ENCODE measurements at regions of chr1 and their contacts with region 1.

Region 1: DNA sequence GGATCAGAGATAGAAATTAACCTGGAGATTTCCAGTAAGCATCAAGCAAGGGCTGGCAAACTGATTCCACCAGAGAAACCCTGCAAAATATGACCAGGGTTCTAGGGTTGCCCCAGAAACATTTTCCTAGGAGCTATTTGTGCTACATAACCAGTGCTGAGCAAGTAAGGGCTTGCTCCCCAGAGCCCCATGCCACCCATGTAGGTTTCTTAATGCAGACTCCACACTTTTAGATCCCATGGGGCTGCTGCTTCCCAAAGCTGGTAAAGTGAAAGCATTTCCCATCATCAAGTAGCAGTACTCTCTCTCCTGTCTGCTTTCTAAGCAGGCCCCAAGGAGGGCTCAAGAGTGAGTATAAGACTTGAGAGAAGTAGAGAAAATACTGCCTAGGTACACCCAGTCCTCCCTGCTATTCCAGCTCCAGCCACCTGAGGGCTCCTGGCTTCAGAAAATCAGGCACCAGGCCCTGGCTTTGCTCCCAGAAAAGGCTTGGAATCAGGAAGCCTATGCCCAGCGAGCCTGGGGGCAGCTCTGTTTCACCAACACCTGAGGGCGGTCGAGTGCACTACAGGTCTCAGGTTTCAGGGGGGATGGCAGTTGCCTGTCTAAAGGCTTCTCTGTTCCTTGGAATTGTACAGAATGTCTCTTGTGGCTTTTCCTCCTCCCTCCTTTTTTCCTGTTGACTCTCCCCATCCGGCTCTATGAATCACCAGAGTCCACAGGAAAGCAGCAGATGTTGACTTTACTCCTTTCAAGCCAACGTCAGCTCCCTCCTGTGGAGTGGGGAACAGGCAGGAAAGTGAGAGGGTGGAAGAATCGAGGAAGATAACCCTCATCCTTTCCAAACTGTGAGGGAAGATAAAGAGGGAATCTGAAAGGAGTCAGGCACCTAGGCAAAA is 6.2 kb upstream of the ANKRD35 start:
- DNase-seq: peak; percentile 93
- H3K4me3 ChIP-seq: no peak overlapping the region; the same call in 1 of the 2 replicates
- H3K27me3 ChIP-seq: no peaks in the 10 kb centered on the region
- CTCF ChIP-seq: peak; percentile 93

Region 2: DNA sequence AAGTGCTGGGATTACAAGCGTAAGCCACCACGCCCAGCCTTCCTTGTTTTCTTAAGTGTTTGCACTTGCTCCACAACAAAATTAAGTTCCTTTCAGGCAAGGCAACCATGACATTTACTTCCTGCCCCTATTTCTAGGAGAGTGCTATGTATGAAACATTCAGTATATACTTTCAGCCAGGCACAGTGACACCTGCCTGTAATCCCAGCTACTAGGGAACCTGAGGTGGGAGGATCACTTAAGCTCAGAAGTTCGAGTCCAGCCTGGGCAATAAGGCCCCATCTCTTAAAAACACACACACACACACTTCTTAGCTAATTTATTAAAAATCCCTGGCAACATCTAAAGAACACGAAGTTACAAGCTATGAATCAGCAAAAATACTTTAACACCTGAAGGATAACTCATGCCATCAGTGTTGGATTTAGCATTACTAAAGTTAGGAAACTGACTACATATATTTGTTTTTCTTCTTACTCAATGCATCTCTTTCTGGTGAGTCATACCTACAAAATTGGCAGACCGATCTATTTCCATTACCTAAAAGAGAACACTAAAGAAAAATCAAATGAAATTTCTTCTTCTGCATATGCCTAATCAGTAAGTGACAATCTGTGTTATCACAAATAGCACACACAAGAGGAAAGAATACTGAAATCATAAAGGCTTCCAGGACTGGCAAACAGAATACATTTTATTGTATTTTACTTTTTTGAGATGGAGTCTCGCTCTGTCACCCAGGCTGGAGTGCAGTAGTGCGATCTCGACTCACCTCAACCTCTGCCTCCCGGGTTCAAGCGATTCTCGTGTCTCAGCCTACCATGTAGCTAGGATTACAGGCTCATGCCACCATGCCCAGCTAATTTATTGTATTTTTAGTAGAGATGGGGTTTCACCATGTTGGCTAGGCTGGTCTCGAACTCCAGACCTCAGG is 109.4 kb before region 1 on chr1:
- CTCF ChIA-PET with region 1: no interaction called
- POLR2A ChIA-PET with region 1: no interaction called
- DNase-seq: peak; percentile 81
- H3K4me3 ChIP-seq: no peak overlapping the region
- H3K27me3 ChIP-seq: no peaks in the 10 kb centered on the region
- CTCF ChIP-seq: no peak

Region 3: DNA sequence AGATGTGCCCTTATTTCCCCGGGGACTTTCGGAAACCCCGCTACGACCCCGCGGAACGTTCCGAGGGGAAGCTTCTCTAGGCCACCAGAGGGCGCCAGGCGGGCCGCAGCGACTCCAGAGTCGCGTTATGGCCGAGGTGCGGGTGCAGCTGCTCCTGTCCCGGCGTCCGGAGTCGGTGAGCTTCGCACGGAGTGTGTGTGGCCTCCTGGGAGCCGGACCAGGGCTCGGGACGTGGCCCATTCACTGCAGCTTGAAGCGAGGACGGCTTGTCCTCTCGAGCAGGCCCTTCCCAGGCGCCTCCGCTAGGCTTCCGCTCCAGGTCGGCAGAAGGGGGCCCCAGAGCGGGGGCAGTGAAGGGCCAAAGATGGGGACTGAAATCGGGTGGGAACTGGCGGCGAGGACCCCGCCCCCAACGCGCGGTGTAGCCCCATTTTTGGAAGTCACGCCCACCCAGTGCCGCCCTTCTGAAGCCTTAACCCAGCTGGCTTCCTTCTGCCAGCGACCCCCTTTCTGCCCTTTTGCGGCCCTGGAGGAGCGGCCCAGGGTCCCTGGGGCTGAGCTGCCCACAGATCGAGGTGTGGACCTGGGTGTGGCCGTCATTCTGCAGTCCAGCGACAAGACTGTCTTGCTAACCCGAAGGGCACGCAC is 46.2 kb before region 1 on chr1 and contains the start of gene NUDT17:
- CTCF ChIA-PET with region 1: interaction called, 44 read pairs
- POLR2A ChIA-PET with region 1: no interaction called
- DNase-seq: no peak
- H3K4me3 ChIP-seq: peak within 1 kb of the TSS; percentile 60
- H3K27me3 ChIP-seq: no peaks in the 10 kb centered on the region
- CTCF ChIP-seq: peak; percentile 98
- polyA plus RNA-seq, gene NUDT17: 4.3 and 4.5 TPM in 2 replicates

Region 4: GRCh38 chr1:145871994-145872924 is 19.6 kb before region 1 on chr1:
- CTCF ChIA-PET with region 1: interaction called, 13 read pairs
- POLR2A ChIA-PET with region 1: no interaction called
- DNase-seq: no peak
- H3K4me3 ChIP-seq: peak overlapping the region; percentile 35
- H3K27me3 ChIP-seq: no peaks in the 10 kb centered on the region
- CTCF ChIP-seq: no peak

Region 5: GRCh38 chr1:145906954-145907753 is 15.3 kb after region 1 on chr1:
- CTCF ChIA-PET with region 1: interaction called, 193 read pairs
- POLR2A ChIA-PET with region 1: interaction called, 3 read pairs
- DNase-seq: no peak
- H3K4me3 ChIP-seq: no peak overlapping the region
- H3K27me3 ChIP-seq: no peaks in the 10 kb centered on the region
- CTCF ChIP-seq: no peak

Region 6: DNA sequence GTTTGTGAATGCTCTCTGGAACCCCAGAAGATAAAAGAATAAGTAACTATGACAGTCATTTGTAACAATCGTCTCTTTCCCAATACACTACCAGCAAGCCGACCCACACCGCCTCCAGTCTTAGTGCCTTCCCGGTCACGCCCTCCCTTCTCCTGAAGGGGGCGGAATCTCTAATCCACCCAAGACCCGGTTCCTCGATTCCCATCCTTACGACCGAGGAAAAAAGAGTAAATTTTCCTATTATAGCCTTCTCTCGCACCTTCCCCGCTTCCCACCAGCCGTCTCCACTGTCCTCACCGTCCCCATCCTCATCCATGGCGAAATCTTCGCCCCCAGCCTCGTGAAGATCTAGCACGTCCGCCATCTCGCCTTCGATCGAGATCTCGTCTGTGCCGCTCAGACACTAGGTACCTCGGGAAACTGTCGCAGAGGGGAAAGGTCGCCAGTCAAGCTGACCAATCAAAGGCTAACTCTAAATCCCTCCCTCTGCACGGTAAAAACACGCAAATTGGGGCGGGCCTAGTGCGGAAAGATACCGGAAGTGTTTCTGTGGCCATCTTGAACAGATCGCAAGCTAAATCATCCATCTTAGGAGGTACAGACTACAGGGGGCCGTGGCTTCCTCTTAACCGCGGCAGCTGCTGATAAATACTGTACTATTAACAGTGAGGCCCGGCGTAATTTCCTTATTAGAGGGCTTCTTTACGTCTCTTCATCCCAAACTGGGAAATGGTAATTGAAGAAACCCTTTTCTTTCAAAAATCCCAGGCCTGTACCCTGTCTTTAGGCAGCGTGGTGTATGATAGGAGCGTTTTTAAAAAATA is 35.4 kb after region 1 on chr1 and contains the start of gene RBM8A:
- CTCF ChIA-PET with region 1: interaction called, 20 read pairs
- POLR2A ChIA-PET with region 1: no interaction called
- DNase-seq: peak; percentile 96
- H3K4me3 ChIP-seq: peak within 1 kb of the TSS; percentile 66
- H3K27me3 ChIP-seq: no peaks in the 10 kb centered on the region
- CTCF ChIP-seq: peak; percentile 78
- polyA plus RNA-seq, gene RBM8A: 71.2 and 135 TPM in 2 replicates

Region 7: GRCh38 chr1:145951526-145951925 is 59.7 kb after region 1 on chr1:
- CTCF ChIA-PET with region 1: no interaction called
- POLR2A ChIA-PET with region 1: no interaction called
- DNase-seq: no peak
- H3K4me3 ChIP-seq: no peak overlapping the region
- H3K27me3 ChIP-seq: no peaks in the 10 kb centered on the region
- CTCF ChIP-seq: no peak

Region 8: GRCh38 chr1:146007506-146008133 is 115.8 kb after region 1 on chr1:
- CTCF ChIA-PET with region 1: interaction called, 31 read pairs
- POLR2A ChIA-PET with region 1: no interaction called
- DNase-seq: no peak
- H3K4me3 ChIP-seq: no peak overlapping the region
- H3K27me3 ChIP-seq: no peaks in the 10 kb centered on the region
- CTCF ChIP-seq: no peak

Region 9: GRCh38 chr1:146019231-146020057 is 127.6 kb after region 1 on chr1:
- CTCF ChIA-PET with region 1: interaction called, 14 read pairs
- POLR2A ChIA-PET with region 1: no interaction called
- DNase-seq: no peak
- H3K4me3 ChIP-seq: no peak overlapping the region
- H3K27me3 ChIP-seq: peaks cover 3% of the 10 kb centered on the region; the same call in 1 of the 2 replicates
- CTCF ChIP-seq: no peak

Measured in BJ (cell line).